ENCODE measurements at regions of chr10 and their contacts with region 1.

Region 1: DNA sequence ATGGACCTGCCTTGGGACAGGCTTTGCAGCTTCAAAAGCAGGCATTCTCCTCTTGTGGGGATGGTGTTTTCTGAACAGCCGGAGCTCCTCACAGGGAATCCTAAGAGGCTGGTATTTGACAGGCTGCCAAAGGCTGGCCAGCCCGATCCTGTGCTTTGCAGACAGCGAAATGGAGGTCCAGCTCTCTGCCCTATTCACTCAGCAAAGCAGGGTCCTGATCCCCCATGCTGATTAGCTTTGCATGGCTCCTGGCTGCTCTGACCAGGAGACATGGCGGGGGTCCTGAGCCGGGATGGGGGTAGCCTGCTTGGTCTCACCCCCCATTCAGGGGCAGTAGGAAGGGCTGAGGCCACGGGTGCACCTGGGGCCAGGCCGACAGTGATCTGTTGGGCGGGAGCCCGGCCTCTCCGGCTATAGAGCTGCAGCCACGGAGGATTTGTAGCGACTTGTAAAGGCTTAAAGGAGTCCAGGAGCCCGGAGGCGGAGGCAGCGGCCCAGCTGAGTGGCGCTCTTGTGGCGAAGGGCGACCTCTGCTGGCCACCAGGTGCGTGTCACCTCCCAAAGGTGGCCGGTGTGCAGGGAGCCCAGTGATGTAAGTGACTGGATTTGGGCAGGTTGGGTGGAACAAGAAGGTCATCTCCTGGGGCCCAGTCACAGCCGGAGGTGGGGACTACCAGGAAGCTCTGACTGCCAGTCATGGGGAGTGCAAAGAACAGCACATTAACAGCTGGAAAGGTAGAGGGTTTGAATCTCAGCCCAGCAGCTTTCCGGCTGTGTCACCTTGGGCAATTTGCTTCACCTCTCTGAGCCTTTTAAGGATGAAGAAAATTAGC is 126.5 kb downstream of the ZMIZ1 start:
- DNase-seq: peak; percentile 93
- ATAC-seq: peak; percentile 78

Region 2: GRCh38 chr10:78047314-78047891 is 1147.9 kb before region 1 on chr10:
- intact Hi-C with region 1: loop called (anchors 2 kb)
- DNase-seq: peak; percentile 86
- ATAC-seq: peak; percentile 82

Region 3: DNA sequence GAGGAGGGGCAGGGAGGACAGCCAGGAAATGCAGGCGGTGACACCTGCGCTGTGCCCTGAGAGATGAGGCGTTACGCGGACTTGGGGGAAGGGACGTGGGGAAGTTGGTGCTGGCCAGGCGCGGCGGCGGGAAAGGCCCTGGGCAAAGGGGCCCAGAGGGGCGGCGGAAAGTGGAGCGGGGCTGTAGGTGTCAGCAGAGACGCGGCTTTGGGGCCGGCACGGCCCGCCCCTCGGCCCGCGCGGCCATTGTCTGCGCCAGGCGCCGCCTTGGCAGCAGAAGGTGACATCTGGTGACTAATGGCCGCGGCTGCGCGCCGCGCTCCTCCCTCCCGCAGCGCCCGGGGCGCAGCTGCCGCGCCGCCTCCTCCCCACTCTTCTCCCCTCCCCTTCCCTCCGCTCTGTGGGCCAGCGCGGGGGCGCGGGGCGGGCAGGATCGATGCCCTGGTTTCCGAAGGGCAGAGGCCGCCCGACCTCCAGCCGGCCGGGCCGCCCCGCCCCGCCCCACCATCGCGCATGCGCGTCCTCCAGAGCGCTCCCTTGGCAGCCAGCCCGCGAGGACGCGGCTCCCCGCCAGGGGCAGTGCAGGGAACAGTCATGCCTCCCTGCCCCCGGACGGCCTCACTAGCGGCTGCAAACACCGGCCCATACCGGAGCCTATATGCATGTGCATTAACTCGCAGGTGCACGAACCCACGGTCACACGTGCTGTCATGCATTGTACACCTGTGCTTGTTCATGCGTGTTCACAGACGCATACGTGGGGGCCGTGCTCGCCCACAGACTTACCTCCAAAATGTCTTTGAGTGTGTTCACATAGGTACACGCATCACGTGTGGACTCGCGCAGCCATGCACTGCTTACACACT is 892.1 kb before region 1 on chr10:
- intact Hi-C with region 1: loop called (anchors 10 kb)
- DNase-seq: peak; percentile 97
- ATAC-seq: peak; percentile 97

Region 4: GRCh38 chr10:78805176-78805575 is 390.1 kb before region 1 on chr10:
- intact Hi-C with region 1: loop called (anchors 5 kb)
- DNase-seq: peak; percentile 87
- ATAC-seq: peak; percentile 93

Region 5: DNA sequence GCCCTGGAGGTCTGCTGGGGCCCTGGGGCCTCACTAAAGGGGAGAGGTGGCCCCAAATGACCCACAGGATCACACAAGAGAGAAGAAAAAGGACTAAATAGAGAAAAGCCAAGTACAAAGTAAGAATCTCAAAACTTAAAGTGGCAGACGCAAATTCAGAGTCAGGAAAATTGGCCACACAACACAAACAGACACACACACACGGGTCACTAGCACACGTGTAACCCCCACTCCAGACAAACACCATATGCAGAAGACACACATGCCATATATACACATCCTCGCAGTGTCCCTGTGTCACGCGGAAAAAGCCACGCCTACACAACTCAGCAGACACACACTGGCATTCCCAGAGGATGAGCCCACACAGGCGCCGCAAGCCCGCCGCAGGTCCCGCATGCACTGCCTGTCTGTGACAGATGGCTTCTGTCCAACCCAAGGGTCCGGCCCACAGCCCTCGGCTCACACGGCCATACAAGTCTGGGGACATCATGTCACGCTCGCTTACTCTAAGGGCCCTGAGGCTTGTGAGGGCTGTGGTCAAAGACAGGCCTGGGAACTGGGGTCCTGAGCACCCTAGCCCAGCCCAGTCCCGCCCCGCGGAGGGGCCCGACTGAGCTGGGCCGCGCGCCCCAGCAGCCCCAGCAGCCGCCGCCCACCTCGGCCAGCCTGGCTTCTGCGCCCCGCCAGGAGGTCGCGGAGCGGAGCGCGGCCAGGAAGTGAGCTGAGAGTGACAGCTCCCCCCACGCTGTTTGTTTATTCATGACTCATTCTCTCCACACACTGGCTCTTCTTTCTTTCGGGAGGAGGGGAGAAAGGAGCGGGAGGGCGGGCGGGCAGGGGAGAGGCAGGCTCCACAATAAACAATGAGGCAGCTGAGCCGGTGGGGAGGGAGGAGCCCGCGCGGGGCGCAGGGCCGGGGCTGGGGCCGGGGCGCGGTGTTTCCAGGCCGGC is 222.1 kb before region 1 on chr10:
- intact Hi-C with region 1: loop called (anchors 5 kb)
- DNase-seq: peak; percentile 85
- ATAC-seq: peak; percentile 72

Region 6: DNA sequence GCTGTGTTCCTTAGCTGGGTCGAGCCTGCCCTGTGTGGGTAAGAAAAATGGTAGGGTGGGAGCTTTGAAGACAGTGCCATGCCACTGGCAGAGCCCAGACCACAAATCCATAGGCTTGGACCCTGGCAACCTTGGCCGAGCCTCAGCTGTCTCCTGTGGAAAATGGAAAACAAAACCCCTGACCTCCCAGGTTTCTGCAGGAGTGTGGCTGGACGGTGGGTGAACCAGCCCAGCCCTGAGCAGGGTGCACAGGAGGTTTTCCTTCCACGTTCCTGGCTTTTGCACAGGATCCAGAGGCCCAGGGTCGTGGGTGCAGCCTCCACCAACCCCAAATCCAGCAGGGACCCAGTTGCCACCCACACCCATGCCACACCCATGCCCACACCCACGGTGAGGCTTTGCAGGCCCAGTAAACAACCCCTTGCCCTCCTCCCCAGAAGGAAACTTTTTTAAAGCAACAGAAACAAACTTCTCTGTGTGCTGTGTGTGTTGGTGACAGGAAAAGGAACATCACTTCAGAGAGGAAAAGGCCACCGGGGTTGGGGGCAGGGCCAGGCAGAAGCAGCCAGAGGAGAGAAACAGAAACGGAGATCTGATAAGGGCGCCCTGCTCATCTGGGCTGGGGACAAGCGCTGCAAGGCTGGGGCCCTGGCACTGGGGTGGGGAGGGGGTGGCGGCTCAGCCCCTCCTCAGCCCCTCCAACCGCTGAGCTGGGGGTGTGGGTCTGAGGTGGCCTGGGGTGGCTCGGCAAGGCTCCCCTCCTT is 147.2 kb before region 1 on chr10:
- intact Hi-C with region 1: no loop called
- DNase-seq: no peak
- ATAC-seq: no peak

Region 7: DNA sequence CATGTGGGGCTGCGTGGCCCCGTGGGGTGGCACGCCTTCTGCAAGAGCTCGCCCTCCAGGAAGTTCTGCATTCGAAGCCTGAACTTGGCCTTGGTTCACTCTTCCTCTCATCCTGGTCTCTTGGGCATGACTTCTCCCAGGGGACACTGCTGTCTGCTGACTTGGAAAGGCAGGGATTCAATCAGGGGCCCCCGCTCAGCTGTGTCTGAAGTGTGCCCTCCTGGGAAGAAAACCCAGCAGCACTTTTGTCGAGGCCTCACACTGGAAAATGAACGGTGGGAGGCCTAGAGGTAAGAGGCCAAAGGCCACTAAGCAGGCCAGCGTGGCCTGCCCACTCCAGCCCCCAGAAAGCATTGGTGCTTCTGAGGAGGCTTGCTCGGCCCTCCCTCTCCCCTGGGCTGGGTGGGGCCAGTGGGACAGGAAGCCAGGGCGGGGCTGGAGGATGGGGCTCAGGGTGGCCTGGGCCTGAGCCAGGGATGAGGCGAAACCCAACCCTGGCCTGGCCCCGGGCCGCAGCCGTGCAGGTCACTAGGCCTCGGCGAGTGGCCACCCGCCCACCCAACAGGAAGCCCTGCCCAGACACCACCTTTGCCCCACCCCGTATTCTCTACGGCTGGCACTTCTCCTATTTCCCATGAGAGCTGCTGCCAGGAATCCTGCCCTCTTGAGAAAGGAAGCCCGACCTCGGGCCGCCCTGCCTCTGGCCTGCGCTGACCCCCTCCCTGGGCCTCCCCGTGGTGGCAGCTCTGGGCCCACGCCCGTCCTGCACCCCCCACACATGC is 45.5 kb before region 1 on chr10:
- intact Hi-C with region 1: loop called (anchors 5 kb)
- DNase-seq: peak; percentile 94
- ATAC-seq: peak; percentile 56

Measured in Right ventricle myocardium inferior (tissue), 1 donor.